CD8-positive, alpha-beta T cell (primary cell): ENCODE measurements at regions of chr3 and their contacts with region 1.

Region 1: DNA sequence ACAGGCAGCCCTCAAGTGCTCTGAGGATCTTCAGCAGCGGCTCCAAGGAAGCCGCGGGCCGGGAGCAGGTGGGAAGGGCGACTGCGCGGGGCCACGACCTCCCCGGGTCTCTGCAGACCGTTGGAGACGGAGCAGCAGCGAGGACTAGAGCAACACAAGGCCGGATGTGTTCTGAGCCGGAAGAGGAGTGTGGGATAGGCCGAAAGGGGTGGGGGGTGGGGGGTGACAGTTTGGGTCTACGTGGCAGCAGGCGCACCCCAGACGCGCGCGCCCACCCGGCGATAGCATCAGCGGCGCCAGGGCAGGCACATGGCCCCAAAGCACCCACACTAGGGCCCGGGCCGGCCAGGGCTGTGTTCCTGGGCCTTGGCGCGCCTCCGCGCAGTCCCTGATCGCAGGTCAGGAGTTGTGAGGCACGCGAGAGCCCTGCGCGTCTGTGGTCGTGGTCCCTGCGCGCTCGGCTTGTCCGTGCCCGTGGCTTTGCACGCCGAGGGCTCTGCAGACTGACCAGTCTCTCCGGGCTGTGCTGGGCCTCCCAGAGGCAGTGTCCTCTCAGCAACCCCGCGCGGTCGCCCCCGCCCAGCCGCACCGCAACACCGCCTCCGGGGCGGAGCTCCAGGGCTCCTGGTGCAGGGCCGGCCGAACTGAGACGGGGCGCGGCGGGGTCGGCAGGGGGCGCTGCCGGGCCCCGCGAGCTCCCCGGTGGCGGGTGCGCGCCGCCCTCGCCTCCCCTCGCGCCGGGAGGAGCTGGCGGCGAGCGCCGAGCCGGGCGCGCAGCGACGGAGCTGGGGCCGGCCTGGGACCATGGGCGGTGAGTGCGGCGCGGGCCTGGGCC is at the start of gene PXYLP1:
- DNase-seq: peak; percentile 78 to 95 (median 89)
- ATAC-seq: peak; percentile 90
- H3K4me3 ChIP-seq: peak within 1 kb of the TSS; percentile 89 to 94
- H3K4me3 Mint-ChIP-seq: peak within 1 kb of the TSS; percentile 91
- H3K27ac ChIP-seq: peak within 1 kb of the TSS; percentile 87 to 94
- H3K27ac Mint-ChIP-seq: peak within 1 kb of the TSS; percentile 98
- H3K4me1 ChIP-seq: peaks cover 42% of the 10 kb centered on the region
- H3K4me1 Mint-ChIP-seq: peaks cover 51% of the 10 kb centered on the region
- H3K27me3 ChIP-seq: no peaks in the 10 kb centered on the region
- H3K27me3 Mint-ChIP-seq: no peaks in the 10 kb centered on the region
- CTCF ChIP-seq: peak; percentile 66
- total RNA-seq, gene PXYLP1: 14.5 to 21.8 TPM

Region 2: DNA sequence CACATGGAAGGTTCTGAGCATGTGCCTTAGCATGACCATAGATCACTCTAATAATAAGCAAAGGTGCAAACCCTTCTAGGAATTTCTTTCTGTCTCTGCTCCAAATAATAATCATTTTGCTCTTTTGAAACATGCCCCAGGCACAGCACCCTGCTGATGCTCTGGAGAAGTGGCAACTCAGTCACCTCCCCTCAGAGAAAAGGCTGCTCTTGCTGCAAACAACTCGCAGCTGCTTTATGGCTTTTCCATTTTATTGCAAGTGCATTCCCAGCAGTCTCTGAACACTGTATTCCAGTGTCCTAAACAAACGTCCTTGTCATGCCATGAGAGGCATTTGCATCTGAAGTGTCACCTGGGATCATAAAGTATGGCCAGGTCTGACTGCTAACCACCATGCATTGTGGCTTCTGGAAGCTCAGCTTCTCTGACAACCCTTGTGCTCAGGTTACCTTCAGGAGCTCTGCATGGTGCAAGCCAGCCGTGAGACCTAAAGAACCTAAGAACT is 911.6 kb before region 1 on chr3:
- CTCF ChIA-PET with region 1: no interaction called
- POLR2A ChIA-PET with region 1: no interaction called
- intact Hi-C with region 1: no loop called
- DNase-seq: no peak
- ATAC-seq: no peak
- H3K4me3 ChIP-seq: no peak overlapping the region
- H3K4me3 Mint-ChIP-seq: no peak overlapping the region
- H3K27ac ChIP-seq: no peak overlapping the region
- H3K27ac Mint-ChIP-seq: no peak overlapping the region
- H3K4me1 ChIP-seq: no peaks in the 10 kb centered on the region
- H3K4me1 Mint-ChIP-seq: no peaks in the 10 kb centered on the region
- H3K27me3 ChIP-seq: no peaks in the 10 kb centered on the region
- H3K27me3 Mint-ChIP-seq: peaks cover 5% of the 10 kb centered on the region
- CTCF ChIP-seq: no peak

Region 3: GRCh38 chr3:140883428-140884040 is 347.8 kb before region 1 on chr3:
- CTCF ChIA-PET with region 1: no interaction called
- POLR2A ChIA-PET with region 1: no interaction called
- intact Hi-C with region 1: no loop called
- DNase-seq: no peak
- ATAC-seq: no peak
- H3K4me3 ChIP-seq: no peak overlapping the region
- H3K4me3 Mint-ChIP-seq: no peak overlapping the region
- H3K27ac ChIP-seq: no peak overlapping the region
- H3K27ac Mint-ChIP-seq: no peak overlapping the region
- H3K4me1 ChIP-seq: no peaks in the 10 kb centered on the region
- H3K4me1 Mint-ChIP-seq: no peaks in the 10 kb centered on the region
- H3K27me3 ChIP-seq: no peaks in the 10 kb centered on the region
- H3K27me3 Mint-ChIP-seq: peaks cover 12% of the 10 kb centered on the region
- CTCF ChIP-seq: no peak

Region 4: DNA sequence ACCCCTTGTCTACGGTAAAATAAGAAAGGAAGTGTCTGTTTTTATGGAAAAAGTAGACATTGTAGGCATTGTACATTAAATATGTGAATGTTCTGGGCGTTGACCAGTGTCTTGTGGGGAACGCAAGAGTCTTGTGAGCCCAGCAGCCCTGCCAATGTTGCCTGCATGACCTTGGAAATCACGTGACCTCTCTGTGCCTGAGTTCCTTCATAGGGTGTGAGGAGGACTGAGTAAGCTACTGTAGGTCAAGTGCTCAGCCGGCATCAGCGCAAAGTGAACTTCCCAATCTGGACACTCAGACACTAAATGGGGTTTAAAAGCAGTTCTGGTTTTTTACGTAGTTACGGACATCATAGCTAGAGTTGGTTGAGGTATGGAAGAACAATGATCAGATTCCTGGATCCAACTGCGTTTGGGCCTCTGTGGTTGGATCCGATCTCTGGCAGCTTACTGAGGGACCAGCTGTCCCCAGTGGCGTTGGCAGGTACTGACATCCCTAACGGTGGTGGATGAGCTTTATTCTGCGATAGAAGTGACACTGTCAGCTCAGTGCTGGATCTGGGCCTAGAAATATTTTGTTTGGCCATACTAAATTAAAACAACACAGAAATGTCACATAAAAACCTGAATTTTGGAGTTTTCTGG is 116.4 kb before region 1 on chr3:
- CTCF ChIA-PET with region 1: no interaction called
- POLR2A ChIA-PET with region 1: no interaction called
- intact Hi-C with region 1: no loop called
- DNase-seq: no peak
- ATAC-seq: no peak
- H3K4me3 ChIP-seq: no peak overlapping the region
- H3K4me3 Mint-ChIP-seq: no peak overlapping the region
- H3K27ac ChIP-seq: no peak overlapping the region
- H3K27ac Mint-ChIP-seq: no peak overlapping the region
- H3K4me1 ChIP-seq: no peaks in the 10 kb centered on the region
- H3K4me1 Mint-ChIP-seq: no peaks in the 10 kb centered on the region
- H3K27me3 ChIP-seq: no peaks in the 10 kb centered on the region
- H3K27me3 Mint-ChIP-seq: no peaks in the 10 kb centered on the region
- CTCF ChIP-seq: no peak

Region 5: DNA sequence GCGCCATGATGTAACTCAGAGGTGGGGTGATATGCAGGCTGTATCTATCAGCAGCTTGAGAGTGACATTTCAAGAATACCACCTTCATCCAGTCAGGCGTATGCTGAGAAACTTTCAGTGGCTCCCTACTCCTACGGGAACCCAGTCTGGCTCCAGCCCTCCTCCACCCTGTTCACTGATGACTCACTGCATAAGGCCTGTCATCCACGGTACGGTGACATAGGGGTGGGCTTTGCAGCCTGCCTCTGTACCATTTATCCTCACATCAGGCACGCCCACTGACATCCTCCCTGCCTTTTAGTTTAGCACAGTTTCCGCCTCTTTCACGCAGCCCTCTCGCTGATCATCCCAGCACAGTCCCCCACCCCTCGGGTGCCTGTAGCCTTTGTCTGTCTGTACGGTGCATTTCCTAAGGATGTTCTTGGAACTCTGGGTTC is 12.0 kb after region 1 on chr3:
- CTCF ChIA-PET with region 1: interaction called, 60 read pairs
- POLR2A ChIA-PET with region 1: interaction called, 19 read pairs
- intact Hi-C with region 1: no loop called
- DNase-seq: peak; percentile 19 to 89 (median 74)
- ATAC-seq: peak; percentile 98
- H3K4me3 ChIP-seq: no peak overlapping the region
- H3K4me3 Mint-ChIP-seq: peak overlapping the region; percentile 57
- H3K27ac ChIP-seq: peak overlapping the region; percentile 2 to 58
- H3K27ac Mint-ChIP-seq: peak overlapping the region; percentile 93
- H3K4me1 ChIP-seq: peaks cover 39% of the 10 kb centered on the region
- H3K4me1 Mint-ChIP-seq: peaks cover 52% of the 10 kb centered on the region
- H3K27me3 ChIP-seq: no peaks in the 10 kb centered on the region
- H3K27me3 Mint-ChIP-seq: no peaks in the 10 kb centered on the region
- CTCF ChIP-seq: no peak

Region 6: GRCh38 chr3:141266797-141267555 is 35.7 kb after region 1 on chr3:
- CTCF ChIA-PET with region 1: interaction called, 39 read pairs
- POLR2A ChIA-PET with region 1: interaction called, 198 read pairs
- intact Hi-C with region 1: loop called in 1 of 2 experiments (anchors 1 kb)
- DNase-seq: peak in 8 of 9 experiments; percentile 32 to 84 (median 60)
- ATAC-seq: peak; percentile 79
- H3K4me3 ChIP-seq: peak overlapping the region; percentile 55 to 62
- H3K4me3 Mint-ChIP-seq: peak overlapping the region; percentile 88
- H3K27ac ChIP-seq: peak overlapping the region; percentile 74 to 77
- H3K27ac Mint-ChIP-seq: peak overlapping the region; percentile 96
- H3K4me1 ChIP-seq: peaks cover 37% of the 10 kb centered on the region
- H3K4me1 Mint-ChIP-seq: peaks cover 50% of the 10 kb centered on the region
- H3K27me3 ChIP-seq: no peaks in the 10 kb centered on the region
- H3K27me3 Mint-ChIP-seq: no peaks in the 10 kb centered on the region
- CTCF ChIP-seq: no peak

Region 7: DNA sequence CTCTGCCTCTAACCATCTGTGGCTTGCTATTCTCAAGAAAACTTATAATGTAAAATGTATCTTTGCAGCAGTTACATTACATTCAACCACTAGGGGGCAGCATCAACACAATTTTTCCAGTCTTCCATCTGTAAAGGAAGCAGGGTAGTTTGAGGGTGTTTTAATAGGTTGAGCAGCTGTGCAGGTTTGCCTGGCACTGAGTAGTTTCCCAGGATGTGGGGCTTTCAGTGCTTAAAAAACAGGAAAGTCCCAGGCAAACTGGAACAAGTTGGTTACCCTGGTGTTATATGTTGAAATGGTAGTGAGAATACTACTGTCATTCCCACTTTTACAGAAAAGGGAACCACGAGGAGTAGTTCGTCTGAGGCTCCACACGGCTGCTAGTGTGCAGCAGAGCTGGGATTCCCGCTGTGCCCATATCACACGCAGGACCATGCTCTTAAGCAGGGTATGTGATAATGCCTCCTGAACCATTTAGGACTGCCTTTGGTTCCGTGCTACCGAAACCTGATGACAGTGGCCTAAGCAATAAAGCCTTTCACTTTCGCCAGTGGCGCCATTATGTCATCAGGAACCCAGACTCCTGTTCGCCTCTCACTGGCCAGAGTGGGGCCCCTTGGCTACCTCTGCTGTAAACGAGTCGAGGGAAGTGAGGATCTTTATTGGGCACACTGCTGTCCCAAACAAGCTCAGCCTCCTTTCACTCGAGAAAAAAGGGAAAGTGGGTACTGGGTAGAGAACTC is 72.3 kb after region 1 on chr3:
- CTCF ChIA-PET with region 1: interaction called, 21 read pairs
- POLR2A ChIA-PET with region 1: interaction called, 14 read pairs
- intact Hi-C with region 1: no loop called
- DNase-seq: peak in 8 of 9 experiments; percentile 40 to 85 (median 64)
- ATAC-seq: peak; percentile 56
- H3K4me3 ChIP-seq: no peak overlapping the region
- H3K4me3 Mint-ChIP-seq: no peak overlapping the region
- H3K27ac ChIP-seq: no peak overlapping the region
- H3K27ac Mint-ChIP-seq: no peak overlapping the region
- H3K4me1 ChIP-seq: peaks cover 60% of the 10 kb centered on the region
- H3K4me1 Mint-ChIP-seq: peaks cover 66% of the 10 kb centered on the region
- H3K27me3 ChIP-seq: no peaks in the 10 kb centered on the region
- H3K27me3 Mint-ChIP-seq: no peaks in the 10 kb centered on the region
- CTCF ChIP-seq: peak; percentile 85

Region 8: GRCh38 chr3:141452036-141452435 is 220.7 kb after region 1 on chr3:
- CTCF ChIA-PET with region 1: interaction called, 3 read pairs
- POLR2A ChIA-PET with region 1: interaction called, 5 read pairs
- intact Hi-C with region 1: loop called (anchors 5 kb)
- DNase-seq: peak in 5 of 9 experiments; percentile 28 to 77 (median 55)
- ATAC-seq: peak; percentile 88
- H3K4me3 ChIP-seq: no peak overlapping the region
- H3K4me3 Mint-ChIP-seq: no peak overlapping the region
- H3K27ac ChIP-seq: peak overlapping the region in 1 of 2 experiments; percentile 51
- H3K27ac Mint-ChIP-seq: no peak overlapping the region
- H3K4me1 ChIP-seq: peaks cover 15% of the 10 kb centered on the region
- H3K4me1 Mint-ChIP-seq: peaks cover 7% of the 10 kb centered on the region
- H3K27me3 ChIP-seq: no peaks in the 10 kb centered on the region
- H3K27me3 Mint-ChIP-seq: peaks cover 2% of the 10 kb centered on the region
- CTCF ChIP-seq: peak; percentile 55